GM12878 (cell line): ENCODE measurements at regions of chr3 and their contacts with region 1.

Region 1: GRCh38 chr3:108130701-108131474 is 40.1 kb upstream of the CD47 start:
- DNase-seq: no peak
- ATAC-seq: no peak
- H3K4me3 ChIP-seq: peak overlapping the region; percentile 13; the same call in 1 of the 2 replicates
- H3K27ac ChIP-seq: no peak overlapping the region
- H3K4me1 ChIP-seq: peaks cover 49% of the 10 kb centered on the region
- H3K27me3 ChIP-seq: no peaks in the 10 kb centered on the region
- CTCF ChIP-seq: no peak
- EP300 ChIP-seq: no peak
- POLR2A ChIP-seq: no peak
- RAD21 ChIP-seq: no peak

Region 2: DNA sequence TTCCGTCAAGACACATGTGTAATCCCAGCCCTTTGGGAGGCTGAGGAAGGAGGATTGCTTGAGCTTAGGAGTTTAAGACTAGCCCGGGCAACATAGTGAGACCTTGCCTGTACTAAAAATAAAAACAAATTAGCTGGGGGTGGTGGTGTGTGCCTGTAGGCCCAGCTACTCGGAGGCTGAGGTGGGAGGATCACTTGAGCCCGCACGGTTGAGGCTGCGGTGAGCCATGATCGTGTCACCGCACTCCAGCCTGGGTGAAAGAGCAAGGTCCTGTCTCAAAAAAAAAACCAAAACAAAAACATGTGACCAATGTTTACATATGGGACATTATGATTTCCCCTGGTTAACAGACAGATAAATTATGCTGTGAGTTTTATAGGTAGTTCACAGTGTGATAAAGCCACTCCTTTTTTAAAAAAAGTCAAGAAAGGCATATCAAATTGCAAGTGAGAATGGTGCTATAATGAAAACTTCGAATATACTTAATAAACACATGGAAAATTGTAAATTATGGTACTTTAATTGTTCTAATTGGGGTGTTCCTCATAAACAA is 598.9 kb before region 1 on chr3:
- CTCF ChIA-PET with region 1: no interaction called
- POLR2A ChIA-PET with region 1: no interaction called
- RAD21 ChIA-PET with region 1: no interaction called
- SMC1A ChIA-PET with region 1: no interaction called
- in situ Hi-C with region 1: no loop called
- intact Hi-C with region 1: no loop called
- DNase-seq: no peak
- ATAC-seq: no peak
- H3K4me3 ChIP-seq: no peak overlapping the region
- H3K27ac ChIP-seq: no peak overlapping the region
- H3K4me1 ChIP-seq: no peaks in the 10 kb centered on the region
- H3K27me3 ChIP-seq: no peaks in the 10 kb centered on the region
- CTCF ChIP-seq: no peak
- EP300 ChIP-seq: no peak
- POLR2A ChIP-seq: no peak
- RAD21 ChIP-seq: no peak

Region 3: GRCh38 chr3:108159865-108160264 is 29.0 kb after region 1 on chr3:
- CTCF ChIA-PET with region 1: interaction called, 4 read pairs
- POLR2A ChIA-PET with region 1: no interaction called
- RAD21 ChIA-PET with region 1: interaction called, 3 read pairs
- SMC1A ChIA-PET with region 1: interaction called, 12 read pairs
- in situ Hi-C with region 1: no loop called
- intact Hi-C with region 1: no loop called
- DNase-seq: no peak
- ATAC-seq: no peak
- H3K4me3 ChIP-seq: no peak overlapping the region
- H3K27ac ChIP-seq: no peak overlapping the region
- H3K4me1 ChIP-seq: no peaks in the 10 kb centered on the region
- H3K27me3 ChIP-seq: no peaks in the 10 kb centered on the region
- CTCF ChIP-seq: no peak
- EP300 ChIP-seq: no peak
- POLR2A ChIP-seq: no peak
- RAD21 ChIP-seq: no peak